ENCODE measurements at regions of chr13 and their contacts with region 1.

Region 1: DNA sequence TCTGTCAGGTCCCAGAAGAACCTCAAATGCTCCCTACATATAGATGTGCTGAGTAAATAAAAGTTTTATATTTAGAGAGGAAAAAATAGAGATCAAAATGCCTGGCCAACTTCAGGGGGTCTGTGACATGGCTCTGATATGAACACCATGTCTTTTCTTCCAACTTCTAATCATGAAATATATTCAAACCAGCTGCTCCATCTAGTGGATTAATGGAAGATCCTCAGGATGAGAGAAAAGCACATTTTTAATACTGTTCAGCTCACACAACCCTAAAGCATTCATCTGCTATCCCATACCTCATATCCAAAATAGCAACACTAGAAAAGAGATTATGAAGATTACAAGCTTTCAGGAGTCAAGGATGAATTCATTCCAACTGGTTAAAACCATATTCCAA is 56.0 kb upstream of the DOCK9 start:
- DNase-seq: peak in 1 of 9 experiments; percentile 50
- ATAC-seq: peak; percentile 62
- H3K4me3 ChIP-seq: no peak overlapping the region
- H3K4me3 Mint-ChIP-seq: no peak overlapping the region
- H3K27ac ChIP-seq: no peak overlapping the region
- H3K27ac Mint-ChIP-seq: no peak overlapping the region
- H3K4me1 ChIP-seq: peaks cover 6% of the 10 kb centered on the region
- H3K4me1 Mint-ChIP-seq: peaks cover 46% of the 10 kb centered on the region
- H3K27me3 ChIP-seq: no peaks in the 10 kb centered on the region
- H3K27me3 Mint-ChIP-seq: no peaks in the 10 kb centered on the region
- CTCF ChIP-seq: peak; percentile 64

Region 2: GRCh38 chr13:98869408-98870090 is 164.3 kb before region 1 on chr13:
- CTCF ChIA-PET with region 1: interaction called, 10 read pairs
- POLR2A ChIA-PET with region 1: no interaction called
- intact Hi-C with region 1: loop called in 1 of 2 experiments (anchors 5 kb)
- DNase-seq: peak in 1 of 9 experiments; percentile 14
- ATAC-seq: no peak
- H3K4me3 ChIP-seq: no peak overlapping the region
- H3K4me3 Mint-ChIP-seq: no peak overlapping the region
- H3K27ac ChIP-seq: no peak overlapping the region
- H3K27ac Mint-ChIP-seq: no peak overlapping the region
- H3K4me1 ChIP-seq: no peaks in the 10 kb centered on the region
- H3K4me1 Mint-ChIP-seq: peaks cover 7% of the 10 kb centered on the region
- H3K27me3 ChIP-seq: no peaks in the 10 kb centered on the region
- H3K27me3 Mint-ChIP-seq: no peaks in the 10 kb centered on the region
- CTCF ChIP-seq: no peak

Region 3: GRCh38 chr13:98910501-98910951 is 123.3 kb before region 1 on chr13:
- CTCF ChIA-PET with region 1: no interaction called
- POLR2A ChIA-PET with region 1: no interaction called
- intact Hi-C with region 1: loop called in 1 of 2 experiments (anchors 5 kb)
- DNase-seq: peak in 5 of 9 experiments; percentile 12 to 48 (median 23)
- ATAC-seq: peak; percentile 77
- H3K4me3 ChIP-seq: no peak overlapping the region
- H3K4me3 Mint-ChIP-seq: peak overlapping the region; percentile 38
- H3K27ac ChIP-seq: peak overlapping the region in 1 of 2 experiments; percentile 17
- H3K27ac Mint-ChIP-seq: peak overlapping the region; percentile 92
- H3K4me1 ChIP-seq: peaks cover 15% of the 10 kb centered on the region
- H3K4me1 Mint-ChIP-seq: peaks cover 24% of the 10 kb centered on the region
- H3K27me3 ChIP-seq: no peaks in the 10 kb centered on the region
- H3K27me3 Mint-ChIP-seq: no peaks in the 10 kb centered on the region
- CTCF ChIP-seq: no peak

Region 4: GRCh38 chr13:98998831-98999638 is 34.8 kb before region 1 on chr13:
- CTCF ChIA-PET with region 1: interaction called, 3 read pairs
- POLR2A ChIA-PET with region 1: no interaction called
- intact Hi-C with region 1: loop called in 1 of 2 experiments (anchors 5 kb)
- DNase-seq: peak in 6 of 9 experiments; percentile 12 to 75 (median 32)
- ATAC-seq: peak; percentile 71
- H3K4me3 ChIP-seq: no peak overlapping the region
- H3K4me3 Mint-ChIP-seq: peak overlapping the region; percentile 66
- H3K27ac ChIP-seq: no peak overlapping the region
- H3K27ac Mint-ChIP-seq: peak overlapping the region; percentile 84
- H3K4me1 ChIP-seq: peaks cover 87% of the 10 kb centered on the region
- H3K4me1 Mint-ChIP-seq: peaks cover 96% of the 10 kb centered on the region
- H3K27me3 ChIP-seq: no peaks in the 10 kb centered on the region
- H3K27me3 Mint-ChIP-seq: no peaks in the 10 kb centered on the region
- CTCF ChIP-seq: no peak

Region 5: DNA sequence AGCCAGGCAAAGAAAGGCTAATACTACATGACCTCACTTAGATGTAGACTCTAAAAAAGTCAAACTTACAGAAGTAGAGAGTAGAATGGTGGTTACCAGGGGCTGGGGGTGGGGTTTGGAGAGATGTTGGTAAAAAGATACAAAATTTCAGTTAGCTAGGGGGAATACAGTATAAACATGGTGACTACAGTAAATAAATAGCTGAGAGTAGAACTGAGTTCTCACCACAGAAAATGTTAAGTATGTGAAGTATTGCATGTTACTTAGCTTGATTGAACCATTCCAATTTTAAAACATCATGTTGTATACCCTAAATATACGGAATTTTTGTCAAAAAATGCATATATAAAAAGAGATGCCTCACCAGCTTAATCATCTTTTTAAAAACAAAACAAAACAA is 11.6 kb after region 1 on chr13:
- CTCF ChIA-PET with region 1: interaction called, 22 read pairs
- POLR2A ChIA-PET with region 1: interaction called, 6 read pairs
- intact Hi-C with region 1: loop called in 1 of 2 experiments (anchors 2 kb)
- DNase-seq: peak in 1 of 9 experiments; percentile 32
- ATAC-seq: no peak
- H3K4me3 ChIP-seq: no peak overlapping the region
- H3K4me3 Mint-ChIP-seq: peak overlapping the region; percentile 75
- H3K27ac ChIP-seq: peak overlapping the region; percentile 49 to 64
- H3K27ac Mint-ChIP-seq: peak overlapping the region; percentile 91
- H3K4me1 ChIP-seq: peaks cover 87% of the 10 kb centered on the region
- H3K4me1 Mint-ChIP-seq: peaks cover 88% of the 10 kb centered on the region
- H3K27me3 ChIP-seq: no peaks in the 10 kb centered on the region
- H3K27me3 Mint-ChIP-seq: no peaks in the 10 kb centered on the region
- CTCF ChIP-seq: no peak

Region 6: DNA sequence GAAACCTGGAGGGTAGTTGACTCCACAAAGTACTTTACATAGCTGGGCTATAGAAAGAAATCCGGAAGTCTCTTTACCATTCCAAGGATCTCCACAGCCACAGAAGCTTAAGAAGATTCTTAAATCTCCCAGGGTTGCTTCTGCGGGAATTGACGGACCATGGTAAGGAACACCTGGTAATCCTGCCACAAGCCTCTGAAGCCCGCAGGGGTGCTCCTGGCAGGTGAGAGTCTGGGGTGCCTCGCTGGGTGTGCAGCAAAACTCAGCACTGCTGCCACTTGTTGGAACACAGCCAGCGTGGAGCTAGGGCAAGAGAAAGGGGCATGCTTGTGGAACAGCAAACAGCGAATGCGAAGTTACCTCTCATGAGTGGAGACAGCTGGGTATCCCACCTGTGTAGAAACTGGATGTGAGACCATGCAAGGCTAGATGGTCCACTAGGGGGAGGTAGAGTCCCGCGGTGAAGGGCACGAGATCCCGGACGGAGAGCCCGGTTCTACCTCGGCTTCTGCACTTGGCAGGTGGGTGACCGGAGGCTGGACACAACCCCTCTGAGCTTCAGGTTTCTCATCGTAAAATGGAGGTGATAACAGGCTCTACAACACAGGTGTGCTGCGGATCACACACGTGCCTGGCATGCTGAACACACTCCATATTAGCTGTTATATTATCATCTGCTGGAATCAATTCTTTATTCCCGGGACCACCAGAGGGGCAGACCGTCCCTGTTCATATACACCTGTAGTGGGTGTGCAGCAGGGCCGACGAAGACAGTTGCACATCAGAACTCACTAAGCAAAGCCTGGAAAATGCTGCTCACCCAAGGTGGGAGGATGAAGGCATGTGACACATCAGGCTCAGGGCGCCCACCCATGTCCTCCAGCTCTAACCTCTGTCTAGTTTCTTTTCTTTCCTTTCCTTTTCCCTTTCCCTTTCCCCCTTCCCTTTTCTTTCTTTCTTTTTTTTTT is 142.8 kb after region 1 on chr13:
- CTCF ChIA-PET with region 1: interaction called, 12 read pairs
- POLR2A ChIA-PET with region 1: interaction called, 3 read pairs
- intact Hi-C with region 1: loop called in 1 of 2 experiments (anchors 5 kb)
- DNase-seq: peak; percentile 58 to 87 (median 82)
- ATAC-seq: peak; percentile 93
- H3K4me3 ChIP-seq: peak overlapping the region in 1 of 2 experiments; percentile 25
- H3K4me3 Mint-ChIP-seq: peak overlapping the region; percentile 72
- H3K27ac ChIP-seq: no peak overlapping the region
- H3K27ac Mint-ChIP-seq: peak overlapping the region; percentile 64
- H3K4me1 ChIP-seq: peaks cover 43% of the 10 kb centered on the region
- H3K4me1 Mint-ChIP-seq: peaks cover 45% of the 10 kb centered on the region
- H3K27me3 ChIP-seq: no peaks in the 10 kb centered on the region
- H3K27me3 Mint-ChIP-seq: no peaks in the 10 kb centered on the region
- CTCF ChIP-seq: peak; percentile 80

Region 7: DNA sequence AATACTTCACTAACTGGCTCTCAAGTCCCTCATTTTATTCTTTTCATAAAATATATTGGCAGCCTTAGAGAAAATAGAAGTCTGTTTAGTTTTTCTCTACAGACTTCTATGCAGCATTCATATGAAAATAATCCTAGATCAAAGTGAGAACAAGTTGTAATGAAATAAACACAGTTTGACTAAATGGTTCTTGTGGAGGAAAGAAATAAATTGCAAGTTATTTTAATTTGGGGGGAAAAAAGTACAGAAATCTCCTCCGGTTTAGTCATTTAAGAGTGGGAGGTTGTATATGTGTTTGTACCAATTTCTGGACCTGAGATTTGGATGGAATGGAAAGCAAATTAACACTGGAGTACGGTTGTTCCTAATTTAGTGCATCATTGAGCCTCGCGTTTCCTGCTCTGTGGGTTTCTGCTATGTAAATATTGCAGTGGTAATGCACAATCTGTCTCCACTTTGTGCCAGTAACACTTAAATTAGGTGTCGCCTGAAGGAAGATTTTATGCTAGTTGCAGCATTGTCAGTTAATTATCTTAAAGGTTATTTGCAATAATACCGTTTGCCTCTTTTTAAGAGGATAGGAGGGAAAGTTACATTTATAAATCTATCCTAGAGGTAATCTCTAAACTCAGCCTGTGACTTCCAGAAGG is 837.6 kb after region 1 on chr13:
- CTCF ChIA-PET with region 1: no interaction called
- POLR2A ChIA-PET with region 1: no interaction called
- intact Hi-C with region 1: no loop called
- DNase-seq: no peak
- ATAC-seq: no peak
- H3K4me3 ChIP-seq: no peak overlapping the region
- H3K4me3 Mint-ChIP-seq: no peak overlapping the region
- H3K27ac ChIP-seq: no peak overlapping the region
- H3K27ac Mint-ChIP-seq: no peak overlapping the region
- H3K4me1 ChIP-seq: no peaks in the 10 kb centered on the region
- H3K4me1 Mint-ChIP-seq: no peaks in the 10 kb centered on the region
- H3K27me3 ChIP-seq: no peaks in the 10 kb centered on the region
- H3K27me3 Mint-ChIP-seq: no peaks in the 10 kb centered on the region
- CTCF ChIP-seq: no peak

Measured in CD8-positive, alpha-beta T cell (primary cell).